ENCODE measurements at regions of chr16 and their contacts with region 1.

Region 1: GRCh38 chr16:569445-570254 is at the start of gene PIGQ:
- DNase-seq: peak; percentile 84 to 89 (median 87)
- ATAC-seq: peak; percentile 66
- H3K4me3 ChIP-seq: peak within 1 kb of the TSS; percentile 99
- H3K27ac ChIP-seq: peak within 1 kb of the TSS; percentile 81
- H3K4me1 ChIP-seq: peaks cover 40 to 92% of the 10 kb centered on the region in 2 experiments
- H3K27me3 ChIP-seq: no peaks in the 10 kb centered on the region
- CTCF ChIP-seq: no peak
- EP300 ChIP-seq: no peak
- POLR2A ChIP-seq: no peak
- RAD21 ChIP-seq: no peak
- polyA plus RNA-seq, gene PIGQ: 0.20 to 2.5 TPM

Region 2: DNA sequence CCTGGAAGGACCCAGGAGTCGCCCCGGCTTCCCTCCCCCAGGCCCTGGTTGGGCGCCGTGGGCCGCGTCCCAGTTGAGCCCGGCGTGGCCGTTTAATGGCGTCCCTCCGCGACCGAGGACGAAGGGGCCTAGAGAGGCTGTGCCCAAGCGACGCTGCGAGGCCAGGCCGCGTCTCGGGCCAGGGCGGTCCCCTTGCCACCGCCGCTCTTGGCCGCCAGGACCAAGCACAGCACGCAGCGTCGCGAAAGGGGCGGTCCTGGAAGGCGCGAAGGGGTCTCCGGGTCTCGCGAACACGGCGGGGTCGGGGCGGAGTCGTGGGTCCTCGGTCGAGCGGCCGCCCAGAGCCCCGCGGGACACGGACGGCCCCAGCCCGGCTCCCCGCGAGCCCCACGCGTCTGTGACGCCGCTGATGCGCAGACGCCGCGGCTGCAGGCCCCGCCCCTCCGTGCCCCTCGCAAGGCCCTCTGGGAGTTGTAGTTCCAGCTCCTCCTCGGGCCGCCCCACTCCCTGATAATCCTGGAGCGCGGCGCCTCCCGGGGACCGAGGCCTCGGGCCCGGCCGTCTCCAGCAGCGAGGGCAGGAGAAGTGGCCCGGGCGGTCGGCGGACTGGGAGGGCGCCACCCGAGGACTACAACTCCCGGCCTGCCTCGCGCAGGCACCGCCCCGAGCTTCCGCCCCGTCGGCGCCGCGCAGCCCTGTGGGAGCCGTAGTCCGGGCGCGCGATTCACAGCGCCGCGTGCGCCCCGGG is 42.5 kb before region 1 on chr16 and contains the start of gene CAPN15:
- CTCF ChIA-PET with region 1: no interaction called
- POLR2A ChIA-PET with region 1: interaction called, 3 read pairs
- in situ Hi-C with region 1: no loop called
- intact Hi-C with region 1: loop called (anchors 5 kb)
- DNase-seq: peak; percentile 88 to 92 (median 90)
- ATAC-seq: peak; percentile 85
- H3K4me3 ChIP-seq: peak within 1 kb of the TSS; percentile 68
- H3K27ac ChIP-seq: peak within 1 kb of the TSS; percentile 98
- H3K4me1 ChIP-seq: peaks cover 27 to 80% of the 10 kb centered on the region in 2 experiments
- H3K27me3 ChIP-seq: no peaks in the 10 kb centered on the region
- CTCF ChIP-seq: no peak; a peak in 1 of 6 replicates
- EP300 ChIP-seq: no peak
- POLR2A ChIP-seq: peak; percentile 70
- RAD21 ChIP-seq: no peak
- polyA plus RNA-seq, gene CAPN15: 0.62 to 0.77 TPM

Region 3: DNA sequence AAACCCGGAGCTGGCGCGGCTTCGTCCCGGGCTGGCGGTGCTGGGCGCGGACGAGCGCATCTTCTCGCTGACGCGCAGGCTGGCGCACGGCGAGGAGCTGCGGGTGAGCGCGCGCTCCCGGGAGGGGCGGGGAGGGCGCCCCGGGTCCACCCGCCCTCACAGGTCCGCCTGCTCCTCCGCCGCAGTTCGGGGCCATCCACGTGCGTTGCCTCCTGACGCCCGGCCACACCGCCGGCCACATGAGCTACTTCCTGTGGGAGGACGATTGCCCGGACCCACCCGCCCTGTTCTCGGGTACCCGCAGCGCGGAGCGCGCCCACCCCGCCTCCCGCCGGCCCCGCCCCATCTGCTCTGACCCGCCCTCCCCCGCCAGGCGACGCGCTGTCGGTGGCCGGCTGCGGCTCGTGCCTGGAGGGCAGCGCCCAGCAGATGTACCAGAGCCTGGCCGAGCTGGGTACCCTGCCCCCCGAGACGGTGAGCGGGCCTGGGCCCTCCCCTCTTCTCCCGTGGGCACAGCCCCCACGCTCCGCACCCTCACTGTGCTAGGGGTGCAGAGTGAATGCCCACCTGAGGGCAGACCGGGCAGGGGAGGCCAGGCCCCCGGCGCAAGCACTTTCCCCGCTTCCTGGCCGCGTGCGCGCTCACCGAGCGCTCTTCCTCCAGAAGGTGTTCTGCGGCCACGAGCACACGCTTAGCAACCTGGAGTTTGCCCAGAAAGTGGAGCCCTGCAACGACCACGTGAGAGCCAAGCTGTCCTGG is 158.7 kb after region 1 on chr16:
- CTCF ChIA-PET with region 1: no interaction called
- POLR2A ChIA-PET with region 1: no interaction called
- in situ Hi-C with region 1: no loop called
- intact Hi-C with region 1: no loop called
- DNase-seq: peak; percentile 82 to 95 (median 86)
- ATAC-seq: peak; percentile 73
- H3K4me3 ChIP-seq: peak overlapping the region; percentile 80
- H3K27ac ChIP-seq: peak overlapping the region; percentile 98
- H3K4me1 ChIP-seq: peaks cover 10 to 93% of the 10 kb centered on the region in 2 experiments; a peak in 4 of 5 replicates
- H3K27me3 ChIP-seq: no peaks in the 10 kb centered on the region
- CTCF ChIP-seq: no peak
- EP300 ChIP-seq: no peak
- POLR2A ChIP-seq: peak; percentile 69
- RAD21 ChIP-seq: no peak

Region 4: GRCh38 chr16:970766-971581 is 401.3 kb after region 1 on chr16 and contains the start of gene LMF1:
- CTCF ChIA-PET with region 1: no interaction called
- POLR2A ChIA-PET with region 1: no interaction called
- in situ Hi-C with region 1: no loop called
- intact Hi-C with region 1: no loop called
- DNase-seq: peak; percentile 91 to 99 (median 99)
- ATAC-seq: peak; percentile 96
- H3K4me3 ChIP-seq: peak within 1 kb of the TSS; percentile 96
- H3K27ac ChIP-seq: peak within 1 kb of the TSS; percentile 80
- H3K4me1 ChIP-seq: peaks cover 4 to 51% of the 10 kb centered on the region in 2 experiments; a peak in 3 of 5 replicates
- H3K27me3 ChIP-seq: peaks cover 34 to 50% of the 10 kb centered on the region in 2 experiments
- CTCF ChIP-seq: no peak
- EP300 ChIP-seq: no peak
- POLR2A ChIP-seq: peak; percentile 85
- RAD21 ChIP-seq: no peak
- polyA plus RNA-seq, gene LMF1: 0.11 TPM